ENCODE measurements at regions of chr11 and their contacts with region 1.

Region 1: GRCh38 chr11:72752088-72752914 is at the start of gene ARAP1:
- DNase-seq: peak; percentile 86
- ATAC-seq: peak; percentile 83
- H3K4me3 Mint-ChIP-seq: peak within 1 kb of the TSS; percentile 95
- H3K27ac Mint-ChIP-seq: peak within 1 kb of the TSS; percentile 92
- H3K4me1 Mint-ChIP-seq: peaks cover 39% of the 10 kb centered on the region
- H3K27me3 Mint-ChIP-seq: no peaks in the 10 kb centered on the region
- total RNA-seq, gene ARAP1: 69.9 to 76.6 TPM

Region 2: GRCh38 chr11:72507050-72507449 is 245.3 kb before region 1 on chr11:
- CTCF ChIA-PET with region 1: no interaction called
- POLR2A ChIA-PET with region 1: no interaction called
- intact Hi-C with region 1: no loop called
- DNase-seq: no peak
- ATAC-seq: no peak
- H3K4me3 Mint-ChIP-seq: no peak overlapping the region
- H3K27ac Mint-ChIP-seq: no peak overlapping the region
- H3K4me1 Mint-ChIP-seq: no peaks in the 10 kb centered on the region
- H3K27me3 Mint-ChIP-seq: peaks cover 8% of the 10 kb centered on the region

Region 3: DNA sequence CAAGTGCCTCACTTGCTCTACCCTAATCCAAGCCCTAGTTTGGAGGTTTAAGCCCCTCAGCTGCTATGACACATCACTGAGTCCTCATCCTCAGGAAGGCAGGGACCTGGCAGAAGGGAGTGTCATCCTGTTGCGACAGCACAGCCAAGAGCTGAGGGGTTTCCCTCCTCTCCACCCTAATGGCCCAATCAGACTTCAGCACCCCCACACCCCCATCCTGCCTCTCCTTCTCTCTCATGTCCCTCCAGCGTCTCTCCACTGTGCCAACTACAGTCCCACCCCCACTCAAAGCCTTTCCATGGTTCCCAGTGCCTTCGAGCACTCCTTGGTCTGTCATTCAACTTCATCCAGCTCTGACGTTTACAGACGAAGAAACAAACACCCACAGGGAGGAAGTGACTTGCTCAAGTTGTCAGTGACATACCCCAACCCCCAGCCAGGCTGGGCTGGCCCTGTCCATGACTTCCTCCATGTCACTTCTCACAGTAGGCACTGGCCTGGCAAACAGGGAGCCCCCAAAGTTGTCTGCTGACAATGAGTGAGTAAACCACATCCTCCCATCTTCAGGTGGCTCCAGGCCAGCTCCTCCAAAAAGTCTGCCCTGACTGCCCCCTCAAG is 15.7 kb before region 1 on chr11:
- CTCF ChIA-PET with region 1: no interaction called
- POLR2A ChIA-PET with region 1: no interaction called
- intact Hi-C with region 1: loop called (anchors 1 to 2 kb)
- DNase-seq: peak; percentile 84
- ATAC-seq: peak; percentile 92
- H3K4me3 Mint-ChIP-seq: peak overlapping the region; percentile 54
- H3K27ac Mint-ChIP-seq: peak overlapping the region; percentile 94
- H3K4me1 Mint-ChIP-seq: peaks cover 54% of the 10 kb centered on the region
- H3K27me3 Mint-ChIP-seq: no peaks in the 10 kb centered on the region

Region 4: DNA sequence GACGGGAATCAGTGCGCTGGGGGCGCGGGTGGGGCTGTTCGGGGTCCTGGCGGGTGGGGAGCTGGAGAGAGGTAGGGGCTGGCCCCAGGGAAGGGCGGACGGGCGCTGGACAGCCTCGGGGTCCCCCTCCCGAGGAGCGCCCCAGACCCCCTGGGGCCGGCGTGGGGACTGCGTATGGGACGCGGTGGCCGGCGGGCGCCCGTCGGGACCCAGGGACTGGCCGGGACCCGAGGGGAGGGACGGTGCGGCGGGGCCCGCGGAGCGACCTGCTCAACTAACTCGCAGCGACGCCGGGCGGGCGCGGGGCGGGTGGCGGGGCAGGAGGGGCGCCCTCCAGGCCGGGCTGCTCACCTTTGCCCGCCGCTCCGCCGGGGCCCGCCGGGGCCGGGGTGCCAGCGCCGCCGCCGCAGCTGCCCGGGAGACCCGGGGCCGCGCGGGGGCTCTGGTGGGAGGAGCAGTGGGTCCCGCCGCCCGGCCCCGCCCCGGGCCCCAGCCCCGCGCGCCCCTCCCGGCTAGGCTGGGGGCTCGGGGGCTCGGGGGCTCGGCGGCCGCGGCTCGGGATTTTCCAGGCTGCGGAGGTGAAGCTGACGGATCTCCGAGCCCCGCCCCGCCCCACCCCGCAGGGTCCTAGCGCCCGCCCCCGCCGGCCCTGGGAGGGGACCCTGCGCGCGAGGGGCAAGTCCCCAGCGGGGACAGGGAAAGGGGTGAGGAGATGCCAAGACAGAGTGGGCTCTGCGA is 29.2 kb after region 1 on chr11:
- CTCF ChIA-PET with region 1: no interaction called
- POLR2A ChIA-PET with region 1: no interaction called
- intact Hi-C with region 1: loop called in 1 of 2 experiments (anchors 1 kb)
- DNase-seq: peak; percentile 69
- ATAC-seq: peak; percentile 71
- H3K4me3 Mint-ChIP-seq: peak overlapping the region; percentile 62
- H3K27ac Mint-ChIP-seq: no peak overlapping the region
- H3K4me1 Mint-ChIP-seq: peaks cover 16% of the 10 kb centered on the region
- H3K27me3 Mint-ChIP-seq: no peaks in the 10 kb centered on the region

Region 5: GRCh38 chr11:72793425-72794367 is 41.4 kb after region 1 on chr11 and contains the start of gene STARD10:
- CTCF ChIA-PET with region 1: interaction called, 3 read pairs
- POLR2A ChIA-PET with region 1: no interaction called
- intact Hi-C with region 1: loop called (anchors 1 to 2 kb)
- DNase-seq: peak; percentile 97
- ATAC-seq: peak; percentile 93
- H3K4me3 Mint-ChIP-seq: peak within 1 kb of the TSS; percentile 84
- H3K27ac Mint-ChIP-seq: peak within 1 kb of the TSS; percentile 99
- H3K4me1 Mint-ChIP-seq: peaks cover 21% of the 10 kb centered on the region
- H3K27me3 Mint-ChIP-seq: no peaks in the 10 kb centered on the region
- total RNA-seq, gene STARD10: 8.3 to 12.9 TPM

Region 6: GRCh38 chr11:73141848-73142286 is 389.6 kb after region 1 on chr11:
- CTCF ChIA-PET with region 1: no interaction called
- POLR2A ChIA-PET with region 1: no interaction called
- intact Hi-C with region 1: loop called in 1 of 2 experiments (anchors 1 kb)
- DNase-seq: peak; percentile 73
- ATAC-seq: peak; percentile 17
- H3K4me3 Mint-ChIP-seq: peak overlapping the region; percentile 92
- H3K27ac Mint-ChIP-seq: peak overlapping the region; percentile 82
- H3K4me1 Mint-ChIP-seq: peaks cover 40% of the 10 kb centered on the region
- H3K27me3 Mint-ChIP-seq: no peaks in the 10 kb centered on the region

Measured in activated CD4-positive, alpha-beta T cell treated with anti-CD3 and anti-CD28 coated beads for 36 hours (primary cell).